ENCODE measurements at regions of chr6 and their contacts with region 1.

Region 1: DNA sequence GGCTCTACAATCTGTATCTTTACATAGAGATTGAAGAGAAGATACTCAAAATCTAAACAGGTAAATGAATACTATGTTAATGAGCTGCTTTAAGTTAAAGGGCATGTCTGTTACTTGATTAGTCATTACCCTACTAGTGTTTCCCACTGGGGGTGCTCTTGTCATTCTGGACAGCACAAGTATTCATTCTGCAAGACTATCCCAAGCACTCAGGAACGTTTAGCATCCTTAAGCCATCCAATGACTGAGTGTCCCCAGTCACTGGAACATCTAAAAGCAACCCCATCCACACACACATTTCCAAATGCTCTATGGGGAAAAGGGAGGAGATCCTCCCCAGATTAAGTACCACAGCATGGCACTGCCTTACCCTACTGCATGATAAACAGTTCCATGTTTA is 25.7 kb downstream of the EZR start:
- DNase-seq: peak; percentile 32
- ATAC-seq: peak; percentile 78
- H3K4me3 ChIP-seq: no peak overlapping the region
- H3K27ac ChIP-seq: no peak overlapping the region
- H3K4me1 ChIP-seq: peaks cover 28% of the 10 kb centered on the region
- H3K27me3 ChIP-seq: no peaks in the 10 kb centered on the region
- CTCF ChIP-seq: no peak; the same call in 1 of the 2 replicates

Region 2: DNA sequence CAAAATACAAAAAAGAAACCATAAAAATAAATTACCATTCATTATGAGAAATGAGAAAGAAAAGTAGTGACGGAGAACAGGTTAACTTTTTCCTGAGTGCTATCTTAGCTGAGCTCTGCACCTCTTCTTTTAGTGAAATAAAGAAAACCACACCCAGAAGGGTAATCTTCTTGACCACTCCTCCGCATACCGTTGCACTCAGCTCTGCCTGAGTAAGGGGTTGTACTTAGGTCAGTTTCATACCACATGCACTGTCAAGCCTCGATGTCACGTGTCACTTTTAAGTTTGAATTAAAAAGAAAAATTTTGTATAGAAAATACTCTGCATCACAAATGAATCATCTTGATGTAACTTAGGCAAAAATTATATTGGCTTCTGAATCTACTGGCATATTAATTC is 22.9 kb after region 1 on chr6:
- CTCF ChIA-PET with region 1: no interaction called
- POLR2A ChIA-PET with region 1: no interaction called
- in situ Hi-C with region 1: no loop called
- intact Hi-C with region 1: no loop called
- DNase-seq: no peak
- ATAC-seq: no peak
- H3K4me3 ChIP-seq: peak overlapping the region; percentile 86 to 89
- H3K27ac ChIP-seq: peak overlapping the region; percentile 92
- H3K4me1 ChIP-seq: peaks cover 52% of the 10 kb centered on the region
- H3K27me3 ChIP-seq: no peaks in the 10 kb centered on the region
- CTCF ChIP-seq: no peak

Region 3: DNA sequence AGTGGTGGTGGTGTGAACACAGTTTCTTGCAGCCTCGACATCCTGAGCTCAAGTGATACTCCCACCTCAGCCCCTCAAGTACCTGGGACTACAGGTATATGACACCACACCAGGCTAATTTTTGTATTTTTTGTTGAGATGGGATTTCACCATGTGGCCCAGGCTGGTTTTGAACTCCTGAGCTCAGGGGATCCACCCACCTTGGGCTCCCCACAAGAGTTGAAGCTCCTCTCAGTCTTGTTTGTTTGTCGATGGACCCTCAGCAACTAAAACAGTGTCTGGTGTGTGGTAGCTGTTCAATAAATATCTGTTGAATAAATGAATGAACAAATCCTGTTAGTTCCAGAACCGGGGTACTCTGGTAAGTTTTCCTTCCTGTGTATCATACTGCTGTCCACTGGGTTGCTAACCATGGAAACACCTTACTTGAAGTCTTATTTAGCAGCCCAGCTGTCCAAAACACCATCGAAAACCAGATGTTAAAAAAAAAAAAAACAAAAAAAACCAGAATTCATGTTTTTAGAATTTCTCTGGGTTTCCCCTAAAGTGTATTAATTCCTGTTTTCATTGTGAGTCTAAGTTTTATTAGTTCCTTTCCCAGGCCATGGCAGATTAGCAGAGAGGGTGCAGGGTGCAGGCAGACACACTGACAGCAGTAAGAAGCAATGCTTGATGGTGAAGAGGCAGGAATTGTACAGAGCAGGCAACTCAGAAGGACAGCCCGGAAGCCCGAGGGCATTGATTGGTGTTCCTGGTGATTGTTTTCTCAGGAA is 33.6 kb after region 1 on chr6:
- CTCF ChIA-PET with region 1: no interaction called
- POLR2A ChIA-PET with region 1: interaction called, 13 read pairs
- in situ Hi-C with region 1: no loop called
- intact Hi-C with region 1: no loop called
- DNase-seq: no peak
- ATAC-seq: no peak
- H3K4me3 ChIP-seq: no peak overlapping the region
- H3K27ac ChIP-seq: no peak overlapping the region
- H3K4me1 ChIP-seq: no peaks in the 10 kb centered on the region
- H3K27me3 ChIP-seq: no peaks in the 10 kb centered on the region
- CTCF ChIP-seq: no peak

Region 4: DNA sequence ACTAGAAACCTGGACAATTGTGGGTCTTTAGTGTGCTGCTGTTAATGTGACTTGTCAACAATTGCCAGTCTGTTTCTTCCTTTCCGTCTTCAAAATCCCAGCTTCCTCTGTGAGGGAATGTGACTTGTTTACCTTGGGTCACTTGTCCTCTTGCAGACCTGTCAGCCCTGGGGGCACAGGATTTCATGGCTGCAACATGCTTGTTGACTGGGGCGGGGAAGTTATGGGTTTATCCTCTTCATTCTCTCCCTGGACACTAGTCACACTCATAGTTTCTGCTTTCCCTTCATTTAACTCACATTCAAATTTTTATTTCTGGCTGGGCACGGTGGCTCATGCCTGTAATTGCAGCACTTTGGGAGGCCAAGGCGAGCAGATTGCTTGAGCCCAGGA is 143.9 kb after region 1 on chr6:
- CTCF ChIA-PET with region 1: no interaction called
- POLR2A ChIA-PET with region 1: interaction called, 10 read pairs
- in situ Hi-C with region 1: no loop called
- intact Hi-C with region 1: no loop called
- DNase-seq: no peak
- ATAC-seq: no peak
- H3K4me3 ChIP-seq: no peak overlapping the region
- H3K27ac ChIP-seq: no peak overlapping the region
- H3K4me1 ChIP-seq: 0 out of 2 replicates have a peak, but pooled peaks cover 3% of the 10 kb centered on the region
- H3K27me3 ChIP-seq: no peaks in the 10 kb centered on the region
- CTCF ChIP-seq: no peak

Region 5: DNA sequence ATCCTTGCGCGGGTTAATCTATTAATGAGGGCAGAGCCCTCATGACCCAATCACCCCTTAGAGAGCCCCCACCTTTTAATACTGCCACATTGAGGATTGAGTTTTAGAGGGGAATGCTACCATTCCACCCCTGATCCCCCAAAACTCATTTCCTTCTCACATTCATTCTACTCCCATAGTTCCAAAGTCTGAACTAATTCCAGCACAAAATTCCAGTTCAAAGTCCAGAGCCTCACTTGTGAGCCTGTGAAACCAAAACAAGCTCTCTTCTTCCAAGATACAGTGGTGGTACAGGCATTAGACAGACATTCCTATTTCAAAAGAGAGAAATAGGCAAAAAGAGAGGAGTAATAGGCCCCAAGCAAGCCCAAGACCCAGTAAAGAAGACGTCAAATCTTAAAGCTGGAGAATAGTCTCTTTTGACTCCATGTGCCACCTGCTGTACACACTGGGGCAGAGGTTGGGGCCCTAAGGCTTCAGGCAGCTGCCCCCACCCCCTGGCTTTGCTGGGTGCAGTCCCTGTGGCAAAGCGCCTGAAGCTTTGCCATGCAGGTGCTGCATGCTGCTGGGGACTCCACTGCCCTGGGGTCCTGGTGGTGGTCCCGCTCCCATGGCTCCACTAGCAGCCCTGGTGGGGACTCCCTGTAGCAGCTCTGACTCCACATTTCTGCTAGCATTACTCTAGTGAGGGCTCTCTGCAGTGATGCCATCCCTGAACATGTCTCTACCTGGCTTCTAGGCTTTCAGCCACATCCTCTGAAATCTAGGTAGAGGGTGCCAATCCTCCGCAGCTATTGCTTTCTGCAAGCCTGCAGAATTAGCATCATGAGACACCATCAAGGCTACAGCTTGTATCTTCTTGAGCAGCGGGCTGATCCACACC is 165.3 kb after region 1 on chr6:
- CTCF ChIA-PET with region 1: interaction called, 11 read pairs
- POLR2A ChIA-PET with region 1: no interaction called
- in situ Hi-C with region 1: no loop called
- intact Hi-C with region 1: no loop called
- DNase-seq: no peak
- ATAC-seq: peak; percentile 75
- H3K4me3 ChIP-seq: no peak overlapping the region
- H3K27ac ChIP-seq: no peak overlapping the region
- H3K4me1 ChIP-seq: no peaks in the 10 kb centered on the region
- H3K27me3 ChIP-seq: no peaks in the 10 kb centered on the region
- CTCF ChIP-seq: peak; percentile 54

Region 6: DNA sequence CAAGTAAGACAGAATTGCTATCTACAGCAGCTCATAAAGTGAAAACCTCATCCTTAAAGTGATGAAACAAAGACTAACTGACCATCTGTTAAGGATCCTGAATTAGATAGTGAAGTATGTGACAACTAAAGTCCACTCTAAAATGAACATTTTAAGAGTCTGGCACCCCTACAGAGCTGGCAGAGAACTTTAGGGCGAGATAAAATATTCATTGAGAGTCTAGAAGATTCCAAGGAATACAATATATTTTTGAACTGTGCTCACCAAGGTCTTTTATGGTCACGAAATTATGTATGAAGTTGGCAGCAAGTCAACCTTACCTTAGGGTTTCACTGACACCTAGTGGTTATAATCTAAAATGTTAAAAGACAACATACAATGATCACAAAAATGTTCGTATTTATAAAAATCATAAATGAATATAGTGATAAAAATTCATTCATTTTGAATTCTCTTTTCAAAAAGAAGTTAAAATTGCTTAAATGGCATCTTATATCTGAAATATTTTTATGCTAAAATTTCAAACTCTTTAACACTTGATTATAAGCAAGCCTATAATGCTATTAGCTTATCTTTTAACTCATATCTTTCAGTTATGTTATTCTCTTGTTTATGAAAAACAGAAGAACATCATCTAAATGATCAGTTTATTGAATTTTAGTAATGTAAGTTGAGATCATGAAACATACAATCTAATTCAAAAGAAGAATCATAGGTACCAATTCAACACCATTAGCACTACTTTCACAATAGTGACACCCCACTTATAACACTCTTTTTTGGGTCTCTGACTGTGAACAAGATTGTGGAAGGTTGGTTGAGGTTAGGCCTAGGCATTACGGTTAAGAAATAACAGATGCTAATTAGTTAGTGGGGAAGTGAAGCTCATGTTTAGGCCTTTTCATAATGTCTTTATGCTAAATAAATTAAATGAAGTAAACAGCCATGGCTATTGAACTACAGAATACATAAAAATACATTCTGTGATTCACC is 179.1 kb after region 1 on chr6:
- CTCF ChIA-PET with region 1: interaction called, 3 read pairs
- POLR2A ChIA-PET with region 1: no interaction called
- in situ Hi-C with region 1: no loop called
- intact Hi-C with region 1: loop called (anchors 5 kb)
- DNase-seq: peak; percentile 35
- ATAC-seq: peak; percentile 63; the same call in 1 of the 2 replicates
- H3K4me3 ChIP-seq: no peak overlapping the region
- H3K27ac ChIP-seq: no peak overlapping the region
- H3K4me1 ChIP-seq: no peaks in the 10 kb centered on the region
- H3K27me3 ChIP-seq: no peaks in the 10 kb centered on the region
- CTCF ChIP-seq: peak; percentile 43; the same call in 1 of the 2 replicates

Measured in Panc1 (cell line).